ENCODE measurements at regions of chr2 and their contacts with region 1.

Region 1: DNA sequence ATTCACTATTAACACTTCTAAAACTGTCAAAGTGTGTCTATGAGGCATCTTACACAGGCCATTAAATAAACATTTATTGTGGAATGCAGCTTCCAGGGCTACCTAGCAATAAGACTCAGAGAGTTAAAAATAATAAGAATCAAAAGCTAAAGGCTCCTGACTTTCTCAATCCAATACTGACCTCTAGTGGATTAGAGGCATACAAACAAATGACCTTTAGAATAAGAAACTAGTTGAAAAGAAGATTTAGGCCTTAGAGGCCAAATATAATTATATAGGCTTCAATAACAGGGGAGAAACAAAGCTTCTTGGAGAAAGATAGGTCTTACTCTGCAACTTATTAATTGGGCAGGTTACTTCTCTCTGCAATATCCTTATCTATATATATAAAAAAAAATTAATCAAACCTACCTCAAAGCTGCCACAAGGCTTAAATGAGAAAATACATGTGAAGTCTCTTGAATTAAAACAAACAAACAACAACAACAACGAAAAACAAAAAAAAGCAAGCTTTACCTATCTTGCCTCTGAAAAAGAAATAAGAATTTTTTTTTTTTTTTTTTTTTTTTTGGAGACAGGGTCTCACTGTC is 246.1 kb downstream of the EXOC6B start:
- DNase-seq: no peak
- ATAC-seq: no peak
- H3K4me3 ChIP-seq: no peak overlapping the region
- H3K27ac ChIP-seq: no peak overlapping the region
- H3K4me1 ChIP-seq: peaks cover 0 to 2% of the 10 kb centered on the region in 2 donors
- H3K27me3 ChIP-seq: no peaks in the 10 kb centered on the region

Region 2: DNA sequence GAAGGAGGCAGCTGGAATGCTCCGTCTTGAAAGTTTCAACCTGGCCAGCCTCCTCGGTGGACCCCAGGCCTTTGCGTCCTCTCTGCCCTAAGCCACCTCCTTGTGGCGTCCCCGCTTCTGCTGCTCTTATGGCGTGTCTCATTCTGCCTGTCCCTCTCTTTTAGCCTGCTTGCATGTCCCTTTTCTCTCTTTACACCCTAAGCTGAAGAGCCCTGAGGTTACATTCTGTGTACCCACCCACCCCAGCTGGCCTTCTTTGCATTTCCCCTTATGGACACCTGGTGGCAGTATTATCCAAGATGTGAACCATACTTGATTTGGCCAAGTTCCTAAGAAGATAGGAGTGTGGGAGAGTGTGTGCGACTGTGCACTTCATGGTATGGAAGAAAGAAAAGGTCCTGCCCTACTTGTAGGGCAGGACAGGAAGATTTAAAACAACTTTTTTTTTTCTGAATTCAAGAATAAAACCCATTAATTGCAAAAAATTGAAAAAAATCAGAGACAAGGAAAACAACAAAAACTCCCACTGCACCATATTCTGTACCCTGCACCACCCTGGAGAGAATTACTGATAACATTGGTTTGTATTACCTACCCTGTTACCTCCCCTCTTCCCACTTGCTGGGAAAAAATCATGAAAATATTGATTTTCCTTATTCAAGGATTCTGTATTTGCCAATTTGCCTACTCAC is 1048.9 kb before region 1 on chr2:
- intact Hi-C with region 1: loop called in 1 of 2 experiments (anchors 10 kb)
- DNase-seq: peak; percentile 33 to 55
- ATAC-seq: no peak
- H3K4me3 ChIP-seq: no peak overlapping the region
- H3K27ac ChIP-seq: no peak overlapping the region
- H3K4me1 ChIP-seq: no peaks in the 10 kb centered on the region
- H3K27me3 ChIP-seq: no peaks in the 10 kb centered on the region

Region 3: DNA sequence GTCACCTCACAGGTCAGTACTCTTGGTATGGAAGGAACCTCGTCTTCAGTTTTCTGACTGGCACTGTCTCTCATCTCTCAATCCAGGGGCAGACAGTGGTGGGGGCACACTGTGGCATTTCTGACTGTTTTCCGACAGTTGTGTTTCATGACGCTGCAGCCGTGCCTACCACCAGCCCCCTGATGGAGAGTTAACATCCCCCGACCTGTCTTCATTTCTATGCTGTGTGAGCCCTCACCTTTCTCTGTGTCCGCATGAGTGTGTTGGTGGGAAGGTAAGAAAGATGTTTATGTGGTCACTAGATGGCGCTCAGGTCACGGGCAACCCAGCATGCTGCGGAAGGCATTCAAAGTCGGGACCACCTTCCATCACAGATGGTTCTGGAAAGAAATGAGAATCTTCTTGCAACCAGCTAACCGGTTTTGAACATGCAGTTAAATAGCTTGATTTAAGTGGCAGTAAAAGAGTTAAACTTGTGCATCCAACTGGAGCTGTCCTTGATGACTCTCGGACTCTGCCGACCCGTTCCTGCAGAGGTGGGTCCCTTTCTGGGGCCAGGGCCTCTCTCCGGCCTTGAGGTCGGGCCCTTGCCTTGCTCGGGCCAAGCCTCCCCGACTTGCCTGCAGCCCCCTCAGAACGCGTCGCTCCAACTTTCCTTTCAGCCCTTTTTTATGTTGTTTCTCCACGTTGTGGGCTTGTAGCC is 1034.0 kb before region 1 on chr2:
- intact Hi-C with region 1: loop called in 1 of 2 experiments (anchors 10 kb)
- DNase-seq: peak; percentile 58 to 78
- ATAC-seq: peak; percentile 62
- H3K4me3 ChIP-seq: no peak overlapping the region
- H3K27ac ChIP-seq: no peak overlapping the region
- H3K4me1 ChIP-seq: no peaks in the 10 kb centered on the region
- H3K27me3 ChIP-seq: no peaks in the 10 kb centered on the region

Region 4: GRCh38 chr2:71923887-71924533 is 655.7 kb before region 1 on chr2:
- intact Hi-C with region 1: loop called in 1 of 2 experiments (anchors 5 kb)
- DNase-seq: peak in 1 of 2 donors; percentile 71
- ATAC-seq: peak; percentile 82
- H3K4me3 ChIP-seq: no peak overlapping the region
- H3K27ac ChIP-seq: no peak overlapping the region
- H3K4me1 ChIP-seq: no peaks in the 10 kb centered on the region
- H3K27me3 ChIP-seq: no peaks in the 10 kb centered on the region

Region 5: GRCh38 chr2:72150157-72150865 is 429.4 kb before region 1 on chr2:
- intact Hi-C with region 1: loop called in 1 of 2 experiments (anchors 10 kb)
- DNase-seq: peak; percentile 74 to 88
- ATAC-seq: peak; percentile 89
- H3K4me3 ChIP-seq: no peak overlapping the region
- H3K27ac ChIP-seq: no peak overlapping the region
- H3K4me1 ChIP-seq: no peaks in the 10 kb centered on the region
- H3K27me3 ChIP-seq: no peaks in the 10 kb centered on the region

Region 6: DNA sequence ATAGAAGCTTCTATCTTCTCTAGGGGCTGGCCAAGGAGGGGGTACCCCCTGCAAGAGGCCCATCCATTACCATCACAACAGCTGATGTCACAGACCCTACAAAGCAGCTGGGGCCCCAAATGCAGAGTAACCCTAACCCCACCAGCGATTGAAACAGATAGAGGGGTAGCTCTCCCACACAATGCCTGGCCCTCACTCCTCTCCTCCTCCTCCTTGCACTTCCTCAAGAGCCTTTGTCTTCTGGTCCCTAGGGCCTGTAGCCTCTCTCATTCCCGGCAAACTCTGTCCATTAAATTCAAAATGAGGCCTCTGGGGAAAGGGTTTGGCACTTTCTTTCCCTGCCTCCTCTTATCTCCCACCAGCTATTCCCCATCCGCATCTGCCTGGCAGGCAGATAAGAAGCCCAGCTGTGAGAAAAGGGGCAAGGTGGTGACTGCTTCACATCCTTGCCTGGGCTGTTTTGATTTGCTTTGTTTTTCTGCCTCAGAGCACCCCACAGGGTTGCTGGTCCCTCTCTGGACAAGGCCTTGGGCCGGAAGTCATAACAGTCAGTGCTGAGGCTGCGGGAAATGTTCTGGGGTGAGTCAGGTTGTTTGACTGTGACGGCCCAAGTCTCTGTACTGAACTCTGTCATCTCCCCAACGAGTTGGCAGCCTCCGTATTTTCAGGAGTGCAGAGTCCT is 405.9 kb before region 1 on chr2:
- intact Hi-C with region 1: loop called in 1 of 2 experiments (anchors 10 kb)
- DNase-seq: no peak
- ATAC-seq: peak; percentile 29
- H3K4me3 ChIP-seq: no peak overlapping the region
- H3K27ac ChIP-seq: no peak overlapping the region
- H3K4me1 ChIP-seq: no peaks in the 10 kb centered on the region
- H3K27me3 ChIP-seq: no peaks in the 10 kb centered on the region